ENCODE measurements at regions of chr11 and their contacts with region 1.

Region 1: GRCh38 chr11:128695539-128696221 is 1.8 kb downstream of the FLI1 start:
- DNase-seq: peak in 5 of 14 experiments; percentile 33 to 84 (median 73)
- ATAC-seq: peak; percentile 54
- H3K4me3 ChIP-seq: peak overlapping the region; percentile 69
- H3K4me3 Mint-ChIP-seq: peak overlapping the region; percentile 92
- H3K27ac ChIP-seq: peak overlapping the region; percentile 60 to 89
- H3K27ac Mint-ChIP-seq: peak overlapping the region; percentile 90
- H3K4me1 ChIP-seq: peaks cover 70% of the 10 kb centered on the region
- H3K4me1 Mint-ChIP-seq: peaks cover 78% of the 10 kb centered on the region
- H3K27me3 ChIP-seq: peaks cover 0 to under 1% of the 10 kb centered on the region in 2 experiments
- H3K27me3 Mint-ChIP-seq: peaks cover 16% of the 10 kb centered on the region
- CTCF ChIP-seq: no peak

Region 2: DNA sequence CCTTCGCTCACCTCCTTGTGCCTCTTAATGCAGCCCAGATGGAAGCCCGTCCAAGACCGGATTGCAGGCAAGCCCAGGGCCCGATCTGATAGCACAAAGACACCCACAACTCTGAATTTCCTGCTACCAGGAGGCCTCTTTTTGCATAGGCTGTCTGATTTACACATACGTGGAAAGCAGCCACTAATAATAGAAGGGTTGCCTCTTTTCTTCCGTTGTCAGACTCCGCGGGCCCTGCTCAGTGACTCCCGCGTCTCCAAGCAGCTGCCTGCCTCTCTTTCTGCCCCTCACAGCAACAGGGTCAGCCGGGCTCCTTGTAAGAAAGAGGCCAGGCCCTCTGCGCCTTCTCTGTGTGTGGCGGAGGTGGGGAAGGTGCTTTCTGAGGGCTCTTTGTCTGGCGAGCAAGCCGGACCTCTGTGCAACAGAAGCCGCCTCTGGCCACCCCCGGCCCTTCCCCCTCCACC is 24.9 kb after region 1 on chr11:
- CTCF ChIA-PET with region 1: interaction called, 3 read pairs
- POLR2A ChIA-PET with region 1: interaction called, 63 read pairs
- intact Hi-C with region 1: loop called (anchors 1 to 2 kb)
- DNase-seq: peak in 9 of 14 experiments; percentile 20 to 74 (median 33)
- ATAC-seq: peak; percentile 46
- H3K4me3 ChIP-seq: peak overlapping the region; percentile 37
- H3K4me3 Mint-ChIP-seq: peak overlapping the region; percentile 87
- H3K27ac ChIP-seq: peak overlapping the region; percentile 65 to 84
- H3K27ac Mint-ChIP-seq: peak overlapping the region; percentile 90
- H3K4me1 ChIP-seq: peaks cover 98% of the 10 kb centered on the region
- H3K4me1 Mint-ChIP-seq: peaks cover 99% of the 10 kb centered on the region
- H3K27me3 ChIP-seq: no peaks in the 10 kb centered on the region
- H3K27me3 Mint-ChIP-seq: peaks cover 3% of the 10 kb centered on the region
- CTCF ChIP-seq: no peak

Region 3: DNA sequence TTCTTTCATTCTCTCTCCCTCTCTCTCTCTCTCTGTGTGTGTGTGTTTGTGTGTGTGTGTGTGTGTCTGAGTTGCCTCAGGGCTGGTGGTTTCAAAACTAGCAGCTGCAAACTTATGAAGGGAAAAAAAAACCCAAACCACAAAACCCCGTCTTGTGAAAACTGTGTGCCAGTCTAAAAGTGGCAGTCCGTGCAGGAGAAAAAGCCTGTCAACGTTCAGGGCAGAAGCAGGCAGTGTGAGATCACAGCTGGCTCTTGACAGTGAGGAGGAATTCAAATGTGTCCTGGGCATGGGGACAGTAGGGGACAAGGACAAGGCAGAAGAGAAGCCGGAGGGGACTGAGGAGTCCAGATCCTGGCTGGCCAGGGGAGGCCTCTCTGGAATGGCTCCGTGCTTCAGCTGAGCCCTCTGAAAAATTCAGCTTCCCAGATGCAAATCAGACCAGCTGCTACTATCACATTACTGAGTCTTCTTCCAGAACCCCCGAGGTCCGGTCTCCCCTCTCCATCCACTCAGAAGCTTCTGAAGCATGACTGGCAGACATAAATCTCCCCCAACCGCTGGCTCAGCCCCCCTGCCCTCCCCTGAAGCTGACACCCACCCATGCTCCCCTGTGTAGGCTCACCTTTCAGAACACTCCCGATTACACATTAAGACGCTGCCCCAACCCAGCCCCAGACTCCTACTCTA is 30.1 kb after region 1 on chr11:
- CTCF ChIA-PET with region 1: no interaction called
- POLR2A ChIA-PET with region 1: interaction called, 63 read pairs
- intact Hi-C with region 1: loop called in 1 of 2 experiments (anchors 2 kb)
- DNase-seq: peak in 12 of 14 experiments; percentile 27 to 92 (median 50)
- ATAC-seq: peak; percentile 61
- H3K4me3 ChIP-seq: peak overlapping the region; percentile 33
- H3K4me3 Mint-ChIP-seq: peak overlapping the region; percentile 80
- H3K27ac ChIP-seq: peak overlapping the region; percentile 4 to 63
- H3K27ac Mint-ChIP-seq: peak overlapping the region; percentile 90
- H3K4me1 ChIP-seq: peaks cover 100% of the 10 kb centered on the region
- H3K4me1 Mint-ChIP-seq: peaks cover 99% of the 10 kb centered on the region
- H3K27me3 ChIP-seq: no peaks in the 10 kb centered on the region
- H3K27me3 Mint-ChIP-seq: peaks cover 5% of the 10 kb centered on the region
- CTCF ChIP-seq: no peak

Region 4: DNA sequence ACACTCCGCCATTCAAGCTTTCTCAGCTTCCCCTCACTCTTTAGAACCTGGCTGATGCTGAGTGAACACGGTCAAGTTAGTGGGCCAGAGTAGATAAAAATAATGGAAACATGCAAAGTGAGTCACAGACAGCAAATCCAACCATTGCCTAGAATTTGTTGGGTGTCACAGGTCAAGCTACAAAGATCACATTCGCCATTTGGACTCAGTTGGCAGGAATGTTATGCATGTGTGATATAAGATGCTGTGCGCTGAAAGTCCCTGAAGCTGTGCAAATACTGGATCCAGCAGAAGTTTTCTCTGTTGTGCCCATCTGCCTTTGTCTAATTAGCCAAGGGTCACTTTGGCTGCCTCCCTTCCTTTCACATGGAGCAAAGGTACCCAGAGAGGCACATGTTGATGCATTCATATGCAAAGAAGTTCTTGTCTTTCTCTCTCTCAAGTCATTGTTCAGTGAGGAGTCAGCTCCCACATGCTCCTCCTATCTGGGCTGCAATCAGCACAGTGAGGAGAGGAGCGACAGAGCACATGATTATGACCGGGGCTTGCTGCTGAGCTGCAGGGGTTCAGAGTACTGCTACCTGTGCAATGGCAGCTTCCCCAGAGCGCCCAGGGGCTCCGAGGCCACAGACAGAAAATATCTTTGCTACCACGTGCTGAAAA is 37.9 kb after region 1 on chr11:
- CTCF ChIA-PET with region 1: no interaction called
- POLR2A ChIA-PET with region 1: interaction called, 63 read pairs
- intact Hi-C with region 1: loop called (anchors 2 to 5 kb)
- DNase-seq: peak in 7 of 14 experiments; percentile 22 to 60 (median 45)
- ATAC-seq: peak; percentile 52
- H3K4me3 ChIP-seq: peak overlapping the region; percentile 6
- H3K4me3 Mint-ChIP-seq: peak overlapping the region; percentile 76
- H3K27ac ChIP-seq: no peak overlapping the region
- H3K27ac Mint-ChIP-seq: peak overlapping the region; percentile 90
- H3K4me1 ChIP-seq: peaks cover 98% of the 10 kb centered on the region
- H3K4me1 Mint-ChIP-seq: peaks cover 98% of the 10 kb centered on the region
- H3K27me3 ChIP-seq: no peaks in the 10 kb centered on the region
- H3K27me3 Mint-ChIP-seq: no peaks in the 10 kb centered on the region
- CTCF ChIP-seq: no peak

Region 5: GRCh38 chr11:128738942-128739341 is 43.3 kb after region 1 on chr11:
- CTCF ChIA-PET with region 1: no interaction called
- POLR2A ChIA-PET with region 1: interaction called, 17 read pairs
- intact Hi-C with region 1: loop called in 1 of 2 experiments (anchors 5 kb)
- DNase-seq: peak in 8 of 14 experiments; percentile 11 to 64 (median 40)
- ATAC-seq: peak; percentile 62
- H3K4me3 ChIP-seq: peak overlapping the region; percentile 24
- H3K4me3 Mint-ChIP-seq: peak overlapping the region; percentile 81
- H3K27ac ChIP-seq: peak overlapping the region in 1 of 2 donors; percentile 46
- H3K27ac Mint-ChIP-seq: peak overlapping the region; percentile 92
- H3K4me1 ChIP-seq: peaks cover 93% of the 10 kb centered on the region
- H3K4me1 Mint-ChIP-seq: peaks cover 92% of the 10 kb centered on the region
- H3K27me3 ChIP-seq: no peaks in the 10 kb centered on the region
- H3K27me3 Mint-ChIP-seq: no peaks in the 10 kb centered on the region
- CTCF ChIP-seq: no peak

Measured in CD4-positive, alpha-beta T cell (primary cell).